Colonic mucosa (tissue), 4 donors: ENCODE measurements at regions of chr20 and their contacts with region 1.

Region 1: DNA sequence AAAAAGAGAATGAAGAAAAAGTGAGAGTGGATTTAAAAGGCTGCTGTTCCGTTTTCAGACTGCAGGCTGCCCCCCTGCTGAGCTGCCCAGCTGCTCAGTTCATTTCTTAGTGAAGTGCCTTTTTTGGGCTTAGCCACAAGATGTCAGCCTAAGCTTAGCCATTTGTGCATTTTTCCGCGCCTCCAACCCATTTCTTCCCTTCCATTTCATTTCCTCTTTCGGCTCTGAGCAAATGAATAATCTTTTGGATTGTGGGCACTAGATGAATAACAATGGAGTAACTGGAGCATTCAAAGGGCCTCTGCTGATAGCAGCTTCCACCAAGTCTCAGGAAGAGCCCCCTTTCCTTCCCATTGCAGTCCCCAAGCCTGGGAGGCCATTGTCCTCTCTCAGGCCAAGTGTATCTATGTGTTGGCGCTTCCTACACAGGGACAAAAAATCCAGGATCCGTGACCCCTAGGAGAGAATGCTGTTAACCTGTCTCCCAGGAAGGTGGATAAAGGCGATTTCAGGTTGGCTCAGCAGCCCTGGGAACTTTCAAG is 83.5 kb upstream of the SPTLC3 start:
- DNase-seq: peak; percentile 45
- H3K4me3 ChIP-seq: no peak overlapping the region
- H3K27ac ChIP-seq: no peak overlapping the region
- H3K4me1 ChIP-seq: no peaks in the 10 kb centered on the region
- H3K27me3 ChIP-seq: no peaks in the 10 kb centered on the region
- CTCF ChIP-seq: peak; percentile 79

Region 2: GRCh38 chr20:12970372-12970821 is 45.1 kb after region 1 on chr20:
- intact Hi-C with region 1: loop called (anchors 5 kb)
- DNase-seq: no peak
- H3K4me3 ChIP-seq: no peak overlapping the region
- H3K27ac ChIP-seq: no peak overlapping the region
- H3K4me1 ChIP-seq: no peaks in the 10 kb centered on the region
- H3K27me3 ChIP-seq: no peaks in the 10 kb centered on the region
- CTCF ChIP-seq: peak; percentile 50

Region 3: DNA sequence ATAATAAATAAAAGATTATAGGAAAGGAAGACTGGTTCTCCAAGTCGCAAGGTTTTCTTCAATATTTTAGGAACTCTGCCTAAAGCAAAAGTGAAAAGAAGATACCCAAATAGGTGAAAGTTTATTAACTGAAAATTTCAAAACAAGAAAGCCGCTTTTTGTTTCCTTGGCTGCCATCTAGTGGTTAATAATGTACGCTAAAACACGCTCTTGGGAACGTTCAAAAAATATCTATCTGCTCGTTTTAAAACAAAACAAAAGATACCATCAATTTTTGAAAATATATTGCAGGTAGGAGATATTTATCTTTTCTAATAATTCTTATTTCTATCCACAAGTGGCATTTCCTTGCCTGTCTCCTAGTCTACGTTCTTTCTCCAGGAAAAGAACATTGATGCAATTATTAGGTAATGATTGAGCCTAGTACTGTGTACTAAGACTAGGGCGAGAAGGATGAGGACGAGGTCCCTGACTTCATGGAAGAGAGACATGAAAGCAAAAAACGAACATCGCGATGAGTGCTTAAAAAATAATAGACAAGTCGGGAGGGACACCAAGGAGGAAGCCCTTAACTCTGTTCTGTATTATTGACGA is 180.7 kb after region 1 on chr20:
- intact Hi-C with region 1: loop called (anchors 5 kb)
- DNase-seq: no peak
- H3K4me3 ChIP-seq: no peak overlapping the region
- H3K27ac ChIP-seq: no peak overlapping the region
- H3K4me1 ChIP-seq: no peaks in the 10 kb centered on the region
- H3K27me3 ChIP-seq: no peaks in the 10 kb centered on the region
- CTCF ChIP-seq: peak; percentile 55

Region 4: DNA sequence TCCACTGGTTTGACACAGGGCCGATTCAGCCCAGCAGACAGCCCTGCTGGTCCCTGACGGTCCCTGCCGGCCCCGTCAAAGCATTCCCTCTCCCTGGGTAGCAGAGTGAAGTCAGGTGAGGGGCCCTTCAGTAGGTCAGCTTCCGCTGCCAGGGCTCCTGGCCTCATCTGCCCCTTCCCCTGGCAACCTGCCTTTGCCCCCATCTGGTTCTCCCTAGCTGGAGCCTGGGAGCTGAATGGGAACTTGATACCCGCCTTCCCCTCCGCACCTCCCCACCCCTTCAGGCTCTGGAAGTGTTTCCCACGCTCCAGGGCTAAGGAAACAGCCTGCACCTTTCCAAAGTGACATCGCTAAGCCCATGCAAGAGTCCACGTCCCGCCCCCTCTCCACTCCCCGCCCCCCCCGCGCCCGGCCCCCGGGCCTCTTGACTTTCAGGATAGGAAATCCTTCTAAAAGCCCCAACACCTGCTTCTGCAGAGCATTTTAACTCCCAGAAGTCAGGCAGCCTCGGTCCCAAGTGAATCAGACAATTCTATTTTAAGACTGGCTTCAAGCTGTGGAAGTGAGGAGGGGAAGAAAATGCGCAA is 349.1 kb after region 1 on chr20:
- intact Hi-C with region 1: no loop called
- DNase-seq: no peak
- H3K4me3 ChIP-seq: no peak overlapping the region
- H3K27ac ChIP-seq: no peak overlapping the region
- H3K4me1 ChIP-seq: no peaks in the 10 kb centered on the region
- H3K27me3 ChIP-seq: no peaks in the 10 kb centered on the region
- CTCF ChIP-seq: no peak

Region 5: DNA sequence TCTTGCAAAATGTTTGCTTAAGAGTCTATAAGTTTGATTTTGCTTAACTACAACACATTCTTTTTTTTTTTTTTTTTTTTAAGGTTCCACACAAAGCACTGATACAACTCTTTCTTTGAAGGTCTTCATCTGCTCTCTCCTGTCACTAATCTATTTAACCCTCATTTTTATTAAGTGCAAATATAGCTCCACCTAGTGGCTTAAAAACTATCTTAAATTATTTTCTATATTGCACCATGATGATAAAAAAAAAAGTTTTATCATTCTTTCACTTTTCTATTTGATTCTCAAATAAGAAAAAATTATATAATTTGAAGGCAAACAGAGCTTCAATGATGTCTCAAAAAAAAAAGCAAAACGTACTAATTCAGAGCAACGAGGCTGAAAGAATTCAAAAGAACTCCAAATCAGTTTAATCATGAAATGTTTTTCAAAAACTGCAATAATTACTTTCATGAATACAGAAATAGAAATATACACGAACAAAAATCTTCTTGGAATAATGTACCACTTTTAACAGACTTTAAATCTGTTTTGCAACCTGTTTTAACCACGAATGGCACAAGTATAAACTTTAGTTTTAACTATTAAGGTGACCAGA is 846.7 kb after region 1 on chr20:
- intact Hi-C with region 1: loop called (anchors 10 kb)
- DNase-seq: no peak
- H3K4me3 ChIP-seq: no peak overlapping the region
- H3K27ac ChIP-seq: no peak overlapping the region
- H3K4me1 ChIP-seq: no peaks in the 10 kb centered on the region
- H3K27me3 ChIP-seq: no peaks in the 10 kb centered on the region
- CTCF ChIP-seq: peak; percentile 55

Region 6: GRCh38 chr20:13819885-13820645 is 894.8 kb after region 1 on chr20:
- intact Hi-C with region 1: no loop called
- DNase-seq: peak; percentile 29
- H3K4me3 ChIP-seq: no peak overlapping the region
- H3K27ac ChIP-seq: peak overlapping the region; percentile 30
- H3K4me1 ChIP-seq: no peaks in the 10 kb centered on the region
- H3K27me3 ChIP-seq: no peaks in the 10 kb centered on the region
- CTCF ChIP-seq: peak; percentile 77